ENCODE measurements at regions of chr7 and their contacts with region 1.

Region 1: DNA sequence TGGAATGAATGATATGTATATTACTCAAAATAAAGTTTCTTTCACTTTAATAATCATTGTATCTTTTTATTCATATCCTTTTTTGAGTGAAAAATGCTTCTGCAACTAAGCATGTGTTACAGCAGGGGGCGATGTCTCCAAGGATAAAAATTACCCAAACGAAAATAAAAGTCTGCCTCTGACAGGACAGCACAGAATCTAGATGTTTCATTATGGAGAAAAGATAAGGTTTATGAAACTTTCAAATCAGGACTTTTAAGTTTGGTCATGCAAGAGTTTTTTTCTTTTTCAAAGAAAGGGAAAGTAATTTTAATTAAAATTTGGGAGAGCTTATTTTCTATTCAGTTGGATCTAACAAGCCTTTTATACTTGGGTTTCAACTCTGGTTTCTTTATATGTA is 48.4 kb downstream of the TES start:
- DNase-seq: peak; percentile 37
- H3K4me3 ChIP-seq: no peak overlapping the region
- H3K27ac ChIP-seq: no peak overlapping the region
- H3K4me1 ChIP-seq: no peaks in the 10 kb centered on the region
- H3K27me3 ChIP-seq: no peaks in the 10 kb centered on the region
- CTCF ChIP-seq: peak; percentile 80

Region 2: DNA sequence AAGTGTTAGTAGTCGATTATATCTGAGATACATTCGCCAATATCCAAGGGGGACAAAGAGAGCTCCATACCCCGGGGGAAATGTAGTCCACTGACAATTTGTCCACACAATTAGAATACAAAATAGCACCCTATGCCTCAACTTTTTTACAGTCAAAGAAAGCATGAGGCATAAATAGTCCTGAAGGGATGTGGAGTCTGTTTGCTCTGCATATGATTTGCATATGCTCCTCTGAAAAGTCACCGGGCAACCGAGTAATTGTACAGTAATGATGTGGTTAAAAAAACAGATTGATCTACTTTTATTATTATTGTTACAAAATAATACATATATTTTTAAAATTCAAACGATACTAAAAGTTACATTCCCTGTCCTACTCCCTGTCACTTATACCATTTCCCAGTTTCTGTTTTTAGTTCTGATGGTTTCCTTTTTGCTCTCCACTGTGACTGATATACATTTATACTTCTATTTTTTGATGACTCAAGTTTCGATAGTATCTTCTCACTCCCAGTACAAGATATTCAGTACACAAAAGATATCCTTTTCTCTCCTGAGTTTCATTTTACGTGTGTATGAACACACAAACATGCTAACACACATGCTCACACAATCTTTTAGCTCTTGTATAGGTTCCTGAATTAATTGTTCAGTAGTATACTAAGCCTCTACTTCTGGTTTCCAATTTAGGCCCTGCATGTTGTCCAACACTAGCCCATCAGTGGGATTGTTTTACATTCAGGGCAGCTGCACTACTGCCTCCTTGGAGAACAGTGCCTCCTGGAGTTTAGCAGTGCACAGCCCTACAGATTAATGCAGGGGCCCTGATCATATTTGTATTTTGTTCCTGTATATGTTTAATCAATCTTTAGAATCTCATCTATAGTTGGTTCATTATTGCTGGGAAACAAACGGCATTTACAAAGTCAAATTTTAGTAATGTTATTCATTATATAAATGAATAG is 82.5 kb after region 1 on chr7:
- intact Hi-C with region 1: loop called (anchors 10 kb)
- DNase-seq: no peak
- H3K4me3 ChIP-seq: no peak overlapping the region
- H3K27ac ChIP-seq: no peak overlapping the region
- H3K4me1 ChIP-seq: no peaks in the 10 kb centered on the region
- H3K27me3 ChIP-seq: no peaks in the 10 kb centered on the region
- CTCF ChIP-seq: no peak

Region 3: GRCh38 chr7:116443101-116443523 is 184.4 kb after region 1 on chr7:
- intact Hi-C with region 1: loop called (anchors 10 kb)
- DNase-seq: no peak
- H3K4me3 ChIP-seq: no peak overlapping the region
- H3K27ac ChIP-seq: no peak overlapping the region
- H3K4me1 ChIP-seq: no peaks in the 10 kb centered on the region
- H3K27me3 ChIP-seq: no peaks in the 10 kb centered on the region
- CTCF ChIP-seq: no peak

Region 4: GRCh38 chr7:116525913-116526861 is 267.5 kb after region 1 on chr7:
- intact Hi-C with region 1: loop called (anchors 5 kb)
- DNase-seq: peak; percentile 76
- H3K4me3 ChIP-seq: peak overlapping the region; percentile 51
- H3K27ac ChIP-seq: peak overlapping the region; percentile 68
- H3K4me1 ChIP-seq: peaks cover 9% of the 10 kb centered on the region
- H3K27me3 ChIP-seq: peaks cover 23% of the 10 kb centered on the region
- CTCF ChIP-seq: peak; percentile 81

Measured in colonic mucosa (tissue), 4 donors.